ENCODE measurements at regions of chr2 and their contacts with region 1.

Region 1: DNA sequence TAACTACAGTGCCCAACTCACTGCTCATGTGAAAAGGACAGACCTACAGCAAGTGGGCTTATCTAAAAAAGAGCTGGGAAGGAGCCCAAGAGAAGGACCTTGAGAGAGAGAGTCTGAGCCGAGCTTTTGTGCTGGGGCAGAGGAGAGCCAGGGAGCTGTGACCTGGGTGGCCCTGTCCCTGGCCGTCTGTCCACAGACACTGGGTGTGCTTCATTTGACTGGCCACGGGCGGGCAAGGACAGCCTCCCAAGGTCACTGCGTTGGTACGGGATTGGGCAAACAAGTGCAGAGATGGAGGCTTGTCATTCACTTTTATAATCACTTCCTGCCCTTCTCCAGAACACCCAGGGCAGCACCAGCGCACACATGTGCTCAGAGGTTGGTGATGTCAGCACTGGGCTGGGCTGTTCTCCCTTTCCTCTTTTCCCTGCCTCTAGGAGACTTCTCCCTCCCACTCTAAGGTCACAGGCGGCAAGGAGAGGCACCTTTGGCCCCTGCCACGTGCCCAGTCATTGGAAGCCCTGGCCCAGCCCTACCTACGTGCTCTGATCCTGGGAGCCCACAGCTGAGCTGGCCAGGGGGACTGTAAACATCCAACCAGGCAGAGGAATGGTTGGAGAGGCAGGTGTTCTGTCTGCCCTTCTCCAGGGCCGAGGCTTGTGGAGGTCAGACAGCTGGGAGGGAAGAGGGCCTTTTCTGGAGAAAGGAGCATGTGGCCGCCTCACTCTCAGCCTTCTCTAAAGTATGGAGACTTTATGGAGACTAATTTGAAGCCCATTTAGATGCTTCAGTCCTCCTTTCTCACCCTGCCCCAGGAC is 6.4 kb upstream of the PSD4 start:
- DNase-seq: peak; percentile 93
- ATAC-seq: peak; percentile 89
- H3K4me3 ChIP-seq: peak overlapping the region in 2 of 3 experiments; percentile 0 to 37; a peak in 3 of 6 replicates
- H3K27ac ChIP-seq: peak overlapping the region; percentile 75
- H3K4me1 ChIP-seq: peaks cover 71% of the 10 kb centered on the region
- H3K27me3 ChIP-seq: no peaks in the 10 kb centered on the region
- CTCF ChIP-seq: peak; percentile 40; the same call in 1 of the 2 replicates
- EP300 ChIP-seq: peak; percentile 7 to 75; a peak in 2 of 4 replicates
- POLR2A ChIP-seq: peak; percentile 89 to 93
- RAD21 ChIP-seq: 0 out of 2 replicates have a peak, but pooled peaks have one; percentile 9

Region 2: DNA sequence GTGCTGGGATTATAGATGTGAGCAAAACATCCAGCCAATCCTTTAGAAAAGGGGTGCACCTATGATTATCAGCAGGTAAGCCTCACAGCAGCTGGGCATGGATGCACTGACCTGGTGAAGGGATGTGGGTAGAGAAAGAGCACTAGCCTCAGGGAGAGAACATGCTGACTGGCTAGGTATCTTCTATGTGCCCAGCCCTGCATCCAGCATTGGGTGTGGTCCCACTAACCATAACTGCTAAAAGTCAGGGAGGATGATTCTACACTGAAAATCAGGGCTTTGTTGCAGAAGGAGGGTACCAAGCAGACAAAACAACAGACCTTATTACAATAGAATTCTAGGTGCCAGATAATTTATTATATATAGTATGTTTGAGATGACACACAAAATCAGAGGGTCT is 712.7 kb before region 1 on chr2:
- CTCF ChIA-PET with region 1: no interaction called
- POLR2A ChIA-PET with region 1: no interaction called
- in situ Hi-C with region 1: no loop called
- intact Hi-C with region 1: no loop called
- DNase-seq: no peak
- ATAC-seq: no peak
- H3K4me3 ChIP-seq: no peak overlapping the region
- H3K27ac ChIP-seq: no peak overlapping the region
- H3K4me1 ChIP-seq: peaks cover 9% of the 10 kb centered on the region
- H3K27me3 ChIP-seq: 0 out of 5 replicates have a peak, but pooled peaks cover 0 to 5% of the 10 kb centered on the region in 2 experiments
- CTCF ChIP-seq: no peak
- EP300 ChIP-seq: no peak
- POLR2A ChIP-seq: no peak
- RAD21 ChIP-seq: no peak

Region 3: GRCh38 chr2:113089916-113090315 is 77.4 kb before region 1 on chr2:
- CTCF ChIA-PET with region 1: no interaction called
- POLR2A ChIA-PET with region 1: interaction called, 11 read pairs
- in situ Hi-C with region 1: no loop called
- intact Hi-C with region 1: no loop called
- DNase-seq: no peak
- ATAC-seq: no peak
- H3K4me3 ChIP-seq: no peak overlapping the region
- H3K27ac ChIP-seq: no peak overlapping the region
- H3K4me1 ChIP-seq: peaks cover 38% of the 10 kb centered on the region
- H3K27me3 ChIP-seq: no peaks in the 10 kb centered on the region; a peak in 1 of 5 replicates
- CTCF ChIP-seq: no peak
- EP300 ChIP-seq: no peak
- POLR2A ChIP-seq: no peak
- RAD21 ChIP-seq: no peak

Region 4: DNA sequence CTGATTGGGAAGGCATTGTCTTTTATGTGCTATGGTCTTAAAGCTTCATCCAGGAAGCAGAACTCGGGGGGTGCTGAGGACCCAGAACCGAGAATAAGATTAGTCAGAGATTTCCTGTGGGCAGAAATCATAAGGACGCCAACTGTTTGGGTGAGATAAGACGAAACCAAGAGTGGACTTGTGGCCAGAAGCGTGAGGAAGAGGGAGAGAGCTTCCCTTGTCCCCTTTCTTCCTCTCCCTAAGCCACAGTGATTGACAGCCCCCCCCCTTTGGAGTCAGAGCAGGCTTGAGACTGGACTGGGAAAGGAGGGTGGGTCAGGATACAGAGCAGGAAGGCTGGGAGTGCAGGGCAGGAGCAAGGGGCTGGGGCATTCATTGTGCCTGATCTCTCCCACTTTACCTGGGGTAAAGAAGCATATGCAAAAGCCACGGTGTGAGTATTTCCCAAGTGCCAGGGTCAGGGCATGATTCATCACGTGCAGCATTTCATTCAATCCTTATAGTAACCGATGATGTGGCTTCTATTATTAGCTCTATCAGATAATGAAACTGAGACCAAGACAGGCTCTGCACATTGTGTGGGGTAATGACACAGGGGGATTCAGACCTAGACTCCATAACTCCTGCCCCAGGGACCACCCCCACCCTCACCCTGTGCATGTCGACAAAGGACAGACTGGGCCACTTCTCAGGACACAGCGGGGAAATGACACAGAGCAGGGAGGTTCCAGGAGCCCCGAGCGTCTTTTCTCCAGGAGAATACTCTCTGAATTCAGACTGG is 43.0 kb before region 1 on chr2:
- CTCF ChIA-PET with region 1: no interaction called
- POLR2A ChIA-PET with region 1: interaction called, 38 read pairs
- in situ Hi-C with region 1: no loop called
- intact Hi-C with region 1: loop called (anchors 1 kb)
- DNase-seq: peak; percentile 23
- ATAC-seq: no peak
- H3K4me3 ChIP-seq: no peak overlapping the region
- H3K27ac ChIP-seq: peak overlapping the region; percentile 92
- H3K4me1 ChIP-seq: peaks cover 80% of the 10 kb centered on the region
- H3K27me3 ChIP-seq: peaks cover 0 to 6% of the 10 kb centered on the region in 2 experiments; a peak in 2 of 5 replicates
- CTCF ChIP-seq: no peak
- EP300 ChIP-seq: no peak
- POLR2A ChIP-seq: no peak
- RAD21 ChIP-seq: no peak

Region 5: GRCh38 chr2:113157118-113157896 is 10.0 kb before region 1 on chr2:
- CTCF ChIA-PET with region 1: no interaction called
- POLR2A ChIA-PET with region 1: interaction called, 103 read pairs
- in situ Hi-C with region 1: no loop called
- intact Hi-C with region 1: no loop called
- DNase-seq: no peak
- ATAC-seq: peak; percentile 81
- H3K4me3 ChIP-seq: peak overlapping the region; percentile 56 to 82 (median 69)
- H3K27ac ChIP-seq: peak overlapping the region; percentile 64
- H3K4me1 ChIP-seq: peaks cover 43% of the 10 kb centered on the region
- H3K27me3 ChIP-seq: no peaks in the 10 kb centered on the region; a peak in 1 of 5 replicates
- CTCF ChIP-seq: peak; percentile 12; the same call in 1 of the 2 replicates
- EP300 ChIP-seq: no peak
- POLR2A ChIP-seq: peak in 1 of 2 experiments; percentile 59; a peak in 1 of 4 replicates
- RAD21 ChIP-seq: no peak

Region 6: GRCh38 chr2:113181258-113182051 is 14.1 kb after region 1 on chr2:
- CTCF ChIA-PET with region 1: interaction called, 3 read pairs
- POLR2A ChIA-PET with region 1: interaction called, 97 read pairs
- in situ Hi-C with region 1: no loop called
- intact Hi-C with region 1: loop called (anchors 2 kb)
- DNase-seq: peak; percentile 50
- ATAC-seq: peak; percentile 51
- H3K4me3 ChIP-seq: peak overlapping the region in 1 of 3 experiments; percentile 30; a peak in 1 of 6 replicates
- H3K27ac ChIP-seq: no peak overlapping the region
- H3K4me1 ChIP-seq: peaks cover 51% of the 10 kb centered on the region
- H3K27me3 ChIP-seq: no peaks in the 10 kb centered on the region
- CTCF ChIP-seq: 0 out of 2 replicates have a peak, but pooled peaks have one; percentile 2
- EP300 ChIP-seq: 0 out of 4 replicates have a peak, but pooled peaks of 1 of the 2 experiments have one; percentile 19
- POLR2A ChIP-seq: peak in 1 of 2 experiments; percentile 31; a peak in 1 of 4 replicates
- RAD21 ChIP-seq: no peak

Region 7: GRCh38 chr2:113211226-113212105 is 44.1 kb after region 1 on chr2:
- CTCF ChIA-PET with region 1: no interaction called
- POLR2A ChIA-PET with region 1: no interaction called
- in situ Hi-C with region 1: no loop called
- intact Hi-C with region 1: no loop called
- DNase-seq: peak; percentile 29
- ATAC-seq: no peak
- H3K4me3 ChIP-seq: no peak overlapping the region
- H3K27ac ChIP-seq: no peak overlapping the region
- H3K4me1 ChIP-seq: peaks cover 76% of the 10 kb centered on the region
- H3K27me3 ChIP-seq: no peaks in the 10 kb centered on the region
- CTCF ChIP-seq: no peak
- EP300 ChIP-seq: no peak
- POLR2A ChIP-seq: no peak
- RAD21 ChIP-seq: no peak

Region 8: GRCh38 chr2:113370478-113371091 is 203.3 kb after region 1 on chr2:
- CTCF ChIA-PET with region 1: no interaction called
- POLR2A ChIA-PET with region 1: no interaction called
- in situ Hi-C with region 1: no loop called
- intact Hi-C with region 1: no loop called
- DNase-seq: peak; percentile 80
- ATAC-seq: peak; percentile 99
- H3K4me3 ChIP-seq: no peak overlapping the region
- H3K27ac ChIP-seq: no peak overlapping the region
- H3K4me1 ChIP-seq: peaks cover 8% of the 10 kb centered on the region
- H3K27me3 ChIP-seq: no peaks in the 10 kb centered on the region
- CTCF ChIP-seq: peak; percentile 94
- EP300 ChIP-seq: no peak
- POLR2A ChIP-seq: no peak
- RAD21 ChIP-seq: peak; percentile 95

Measured in HepG2 (cell line).